Activated T-helper 1 cell treated with anti-CD3 and anti-CD28 coated beads, Interleukin-12 subunit alpha, Interleukin-12 subunit beta, Interleukin-2, Interleukin-4 antibody, amounts not matched to agents 30 ng/mL and 10 ng/mL and 1 ng/mL, durations not matched to agents 14 hours and 24 hours and 36 hours (primary cell): ENCODE measurements at regions of chr14 and their contacts with region 1.

Region 1: GRCh38 chr14:104078031-104078455 is 7.5 kb upstream of the ASPG start:
- DNase-seq: peak; percentile 78
- H3K4me3 Mint-ChIP-seq: no peak overlapping the region
- H3K27ac Mint-ChIP-seq: no peak overlapping the region
- H3K4me1 Mint-ChIP-seq: no peaks in the 10 kb centered on the region
- H3K27me3 Mint-ChIP-seq: no peaks in the 10 kb centered on the region

Region 2: GRCh38 chr14:103808403-103809001 is 269.5 kb before region 1 on chr14:
- intact Hi-C with region 1: loop called (anchors 10 kb)
- DNase-seq: peak; percentile 43
- H3K4me3 Mint-ChIP-seq: no peak overlapping the region
- H3K27ac Mint-ChIP-seq: no peak overlapping the region
- H3K4me1 Mint-ChIP-seq: peaks cover 8% of the 10 kb centered on the region
- H3K27me3 Mint-ChIP-seq: peaks cover 3% of the 10 kb centered on the region

Region 3: GRCh38 chr14:104094709-104095438 is 16.8 kb after region 1 on chr14:
- intact Hi-C with region 1: loop called (anchors 1 kb)
- DNase-seq: peak; percentile 60
- H3K4me3 Mint-ChIP-seq: no peak overlapping the region
- H3K27ac Mint-ChIP-seq: no peak overlapping the region
- H3K4me1 Mint-ChIP-seq: peaks cover 4% of the 10 kb centered on the region
- H3K27me3 Mint-ChIP-seq: no peaks in the 10 kb centered on the region

Region 4: GRCh38 chr14:104130974-104131651 is 53.1 kb after region 1 on chr14:
- intact Hi-C with region 1: loop called (anchors 1 kb)
- DNase-seq: no peak
- H3K4me3 Mint-ChIP-seq: no peak overlapping the region
- H3K27ac Mint-ChIP-seq: no peak overlapping the region
- H3K4me1 Mint-ChIP-seq: no peaks in the 10 kb centered on the region
- H3K27me3 Mint-ChIP-seq: peaks cover 16% of the 10 kb centered on the region

Region 5: DNA sequence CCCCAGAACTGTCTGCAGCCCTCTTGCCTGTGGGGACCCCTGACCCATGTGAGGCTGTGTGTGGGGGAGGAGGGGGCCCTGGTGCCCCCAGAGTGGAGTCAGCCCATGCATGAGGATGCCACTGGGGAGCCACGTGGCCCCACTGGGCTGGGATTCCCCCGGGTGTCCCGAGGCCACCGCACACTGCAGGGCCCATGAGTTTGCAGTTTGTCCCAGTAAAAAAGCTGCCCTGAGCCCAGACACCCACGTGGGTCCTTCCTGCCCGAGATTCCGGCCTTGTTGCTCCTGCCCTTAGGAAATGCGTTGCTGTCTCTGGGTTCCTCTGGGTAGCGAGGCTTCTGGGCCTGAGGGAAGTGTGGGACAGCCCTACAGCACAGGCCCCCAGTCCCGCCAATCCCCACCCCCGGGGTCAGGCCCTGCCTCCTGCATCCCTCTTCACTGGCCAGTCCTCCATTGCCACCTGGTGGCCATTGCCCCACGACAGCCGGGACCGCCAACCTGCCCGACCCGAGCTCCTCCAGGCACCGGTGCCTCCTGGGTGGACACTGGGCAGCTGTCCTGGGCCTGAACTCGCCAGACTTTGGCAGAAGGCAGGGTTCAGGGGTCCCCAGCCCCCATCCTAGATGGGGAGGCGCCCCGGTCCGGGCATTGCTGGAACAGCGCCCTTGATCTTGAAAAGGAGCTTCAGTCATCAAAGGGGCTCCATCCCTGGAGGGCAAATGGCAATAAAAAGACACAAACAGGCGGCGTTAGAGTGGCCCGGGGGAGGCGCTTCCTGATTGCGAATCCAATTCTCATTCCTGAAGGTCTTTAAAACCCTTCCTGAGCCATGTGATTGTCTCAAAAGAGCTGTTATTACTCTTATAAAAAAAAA is 485.9 kb after region 1 on chr14:
- intact Hi-C with region 1: loop called (anchors 1 kb)
- DNase-seq: peak; percentile 42
- H3K4me3 Mint-ChIP-seq: no peak overlapping the region
- H3K27ac Mint-ChIP-seq: no peak overlapping the region
- H3K4me1 Mint-ChIP-seq: no peaks in the 10 kb centered on the region
- H3K27me3 Mint-ChIP-seq: peaks cover 2% of the 10 kb centered on the region

Region 6: GRCh38 chr14:104639889-104640548 is 562.0 kb after region 1 on chr14:
- intact Hi-C with region 1: loop called (anchors 1 kb)
- DNase-seq: peak; percentile 19
- H3K4me3 Mint-ChIP-seq: no peak overlapping the region
- H3K27ac Mint-ChIP-seq: no peak overlapping the region
- H3K4me1 Mint-ChIP-seq: no peaks in the 10 kb centered on the region
- H3K27me3 Mint-ChIP-seq: peaks cover 6% of the 10 kb centered on the region